ENCODE measurements at regions of chrX and their contacts with region 1.

Region 1: GRCh38 chrX:103254921-103255493 is at the start of gene TCEAL8:
- DNase-seq: peak; percentile 45 to 90
- H3K4me3 ChIP-seq: peak within 1 kb of the TSS; percentile 56 to 73
- H3K27ac ChIP-seq: peak within 1 kb of the TSS; percentile 76 to 83
- H3K4me1 ChIP-seq: peaks cover 0 to 4% of the 10 kb centered on the region in 2 donors
- H3K27me3 ChIP-seq: no peaks in the 10 kb centered on the region
- CTCF ChIP-seq: no peak
- total RNA-seq, gene TCEAL8: 39.1 TPM

Region 2: DNA sequence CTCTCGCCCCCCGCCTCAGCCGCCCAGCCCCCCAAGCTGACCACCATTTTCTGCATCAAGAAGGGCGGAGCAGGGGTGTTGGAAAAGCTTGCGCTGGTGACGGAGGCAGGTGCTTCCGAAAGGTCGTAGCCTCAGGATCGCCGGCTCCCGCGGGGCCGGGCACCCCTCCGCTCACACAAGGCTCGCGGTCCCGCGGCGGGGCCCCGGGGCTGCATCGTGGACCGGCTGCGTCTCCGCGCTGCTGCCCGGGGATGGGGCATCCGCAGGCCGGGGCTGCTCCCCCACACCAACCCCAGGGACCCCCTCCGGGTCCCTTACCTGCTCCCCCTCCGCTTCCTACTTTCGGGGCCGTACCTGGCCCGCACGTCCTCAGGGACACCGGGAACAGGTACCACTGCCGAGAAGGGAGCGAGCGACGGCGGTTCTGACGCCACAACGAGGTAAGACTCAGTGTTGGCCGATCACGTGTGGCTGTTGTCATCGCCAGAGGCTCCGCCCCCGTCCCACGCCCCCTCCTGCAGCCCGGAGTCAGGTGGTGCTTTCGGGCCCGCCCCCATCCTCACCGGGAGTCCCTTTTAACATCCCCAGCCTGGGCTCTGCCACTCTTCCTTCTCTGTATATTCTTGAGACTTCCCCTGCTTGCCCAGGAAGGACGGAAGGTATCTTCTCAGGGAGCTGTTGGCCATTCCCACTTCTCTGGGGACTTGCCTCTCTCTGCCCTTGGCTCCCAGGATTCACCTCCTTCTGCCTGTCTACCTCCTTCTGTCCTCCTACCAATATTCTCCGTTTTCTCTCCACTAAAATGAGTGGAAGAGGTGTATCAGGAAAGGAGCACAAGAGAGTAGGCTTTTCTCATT is 55.8 kb after region 1 on chrX and contains the start of gene BEX2:
- intact Hi-C with region 1: loop called (anchors 2 kb)
- DNase-seq: peak in 1 of 2 donors; percentile 73
- H3K4me3 ChIP-seq: peak within 1 kb of the TSS; percentile 54 to 62
- H3K27ac ChIP-seq: no peak within 1 kb of the TSS
- H3K4me1 ChIP-seq: no peaks in the 10 kb centered on the region
- H3K27me3 ChIP-seq: peaks cover 6% of the 10 kb centered on the region
- CTCF ChIP-seq: no peak
- total RNA-seq, gene BEX2: 2.0 TPM

Measured in ascending aorta (tissue), 2 donors.